Left lung (tissue), 14 donors: ENCODE measurements at regions of chr12 and their contacts with region 1.

Region 1: DNA sequence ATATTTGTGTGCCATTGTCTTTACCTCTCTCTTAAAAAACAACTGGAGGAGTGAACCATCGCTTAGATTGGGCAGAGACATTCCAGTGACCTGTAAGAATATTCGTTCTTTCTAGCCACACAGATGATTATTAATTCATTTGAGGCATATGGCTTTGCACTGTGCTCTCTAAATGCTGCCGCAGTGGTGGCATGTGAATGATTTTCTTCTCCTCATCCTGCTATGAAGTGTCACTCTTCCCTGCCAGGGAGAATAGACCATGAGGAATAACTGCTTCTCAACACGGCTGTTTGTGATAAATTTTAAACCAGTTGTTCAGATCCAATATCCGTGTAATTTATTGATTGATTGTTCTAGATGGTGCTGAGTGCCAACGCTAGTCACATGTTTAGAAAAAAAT is 225.3 kb downstream of the CNTN1 start:
- DNase-seq: no peak
- ATAC-seq: no peak
- H3K4me3 ChIP-seq: no peak overlapping the region
- H3K27ac ChIP-seq: no peak overlapping the region
- H3K4me1 ChIP-seq: no peaks in the 10 kb centered on the region
- H3K27me3 ChIP-seq: no peaks in the 10 kb centered on the region
- CTCF ChIP-seq: no peak

Region 2: GRCh38 chr12:40622246-40622838 is 295.2 kb before region 1 on chr12:
- intact Hi-C with region 1: loop called in 1 of 2 experiments (anchors 5 kb)
- DNase-seq: peak in 2 of 4 donors; percentile 51 to 81
- ATAC-seq: peak; percentile 71
- H3K4me3 ChIP-seq: no peak overlapping the region
- H3K27ac ChIP-seq: no peak overlapping the region
- H3K4me1 ChIP-seq: no peaks in the 10 kb centered on the region
- H3K27me3 ChIP-seq: no peaks in the 10 kb centered on the region
- CTCF ChIP-seq: peak; percentile 56 to 71